ENCODE measurements at regions of chr5 and their contacts with region 1.

Region 1: GRCh38 chr5:116137544-116138378 is 52.9 kb downstream of the COMMD10 start:
- DNase-seq: no peak
- H3K4me3 ChIP-seq: no peak overlapping the region
- H3K27ac ChIP-seq: no peak overlapping the region
- H3K4me1 ChIP-seq: no peaks in the 10 kb centered on the region
- H3K27me3 ChIP-seq: no peaks in the 10 kb centered on the region
- CTCF ChIP-seq: peak; percentile 70

Region 2: DNA sequence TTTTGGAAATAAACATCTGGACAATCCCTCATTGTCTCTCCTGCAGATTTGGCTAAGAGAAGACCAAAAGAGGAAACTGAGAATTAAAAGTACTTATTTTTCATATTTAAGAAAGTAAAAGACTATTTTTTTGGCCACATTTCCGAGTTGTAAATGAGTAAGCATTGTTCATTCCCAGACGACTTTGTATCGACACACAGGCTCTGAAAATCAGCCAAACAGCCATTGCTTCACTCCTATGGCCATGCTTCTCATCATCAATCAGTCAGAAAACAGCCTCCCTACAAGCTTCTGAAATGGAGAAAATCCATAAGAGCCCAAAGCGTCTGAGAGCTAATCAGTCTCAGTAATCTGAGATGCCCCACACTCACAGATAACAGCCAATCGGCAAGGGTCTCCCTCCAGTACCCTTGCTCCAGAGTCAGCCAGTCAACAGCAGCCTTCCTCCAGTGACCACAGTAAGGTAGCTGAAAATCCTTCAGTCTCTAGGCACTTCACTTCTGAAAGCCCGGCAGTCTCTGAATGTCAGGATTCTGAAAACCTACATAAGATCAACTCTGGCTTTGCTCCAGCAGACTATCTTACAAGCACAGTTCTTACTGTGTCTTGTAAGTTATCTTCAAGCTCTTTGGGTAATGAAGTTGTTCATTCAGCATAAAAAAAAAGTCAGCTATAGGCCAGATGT is 352.2 kb before region 1 on chr5:
- intact Hi-C with region 1: no loop called
- DNase-seq: no peak
- H3K4me3 ChIP-seq: no peak overlapping the region
- H3K27ac ChIP-seq: no peak overlapping the region
- H3K4me1 ChIP-seq: no peaks in the 10 kb centered on the region
- H3K27me3 ChIP-seq: no peaks in the 10 kb centered on the region
- CTCF ChIP-seq: no peak

Region 3: GRCh38 chr5:116002116-116002906 is 135.4 kb before region 1 on chr5:
- intact Hi-C with region 1: no loop called
- DNase-seq: no peak
- H3K4me3 ChIP-seq: no peak overlapping the region
- H3K27ac ChIP-seq: no peak overlapping the region
- H3K4me1 ChIP-seq: no peaks in the 10 kb centered on the region
- H3K27me3 ChIP-seq: no peaks in the 10 kb centered on the region
- CTCF ChIP-seq: no peak

Region 4: GRCh38 chr5:116947691-116948528 is 810.1 kb after region 1 on chr5:
- intact Hi-C with region 1: loop called (anchors 5 kb)
- DNase-seq: peak; percentile 77
- H3K4me3 ChIP-seq: no peak overlapping the region
- H3K27ac ChIP-seq: no peak overlapping the region
- H3K4me1 ChIP-seq: no peaks in the 10 kb centered on the region
- H3K27me3 ChIP-seq: no peaks in the 10 kb centered on the region
- CTCF ChIP-seq: peak; percentile 66

Measured in colonic mucosa (tissue), 4 donors.